T-cell (primary cell): ENCODE measurements at regions of chr5 and their contacts with region 1.

Region 1: DNA sequence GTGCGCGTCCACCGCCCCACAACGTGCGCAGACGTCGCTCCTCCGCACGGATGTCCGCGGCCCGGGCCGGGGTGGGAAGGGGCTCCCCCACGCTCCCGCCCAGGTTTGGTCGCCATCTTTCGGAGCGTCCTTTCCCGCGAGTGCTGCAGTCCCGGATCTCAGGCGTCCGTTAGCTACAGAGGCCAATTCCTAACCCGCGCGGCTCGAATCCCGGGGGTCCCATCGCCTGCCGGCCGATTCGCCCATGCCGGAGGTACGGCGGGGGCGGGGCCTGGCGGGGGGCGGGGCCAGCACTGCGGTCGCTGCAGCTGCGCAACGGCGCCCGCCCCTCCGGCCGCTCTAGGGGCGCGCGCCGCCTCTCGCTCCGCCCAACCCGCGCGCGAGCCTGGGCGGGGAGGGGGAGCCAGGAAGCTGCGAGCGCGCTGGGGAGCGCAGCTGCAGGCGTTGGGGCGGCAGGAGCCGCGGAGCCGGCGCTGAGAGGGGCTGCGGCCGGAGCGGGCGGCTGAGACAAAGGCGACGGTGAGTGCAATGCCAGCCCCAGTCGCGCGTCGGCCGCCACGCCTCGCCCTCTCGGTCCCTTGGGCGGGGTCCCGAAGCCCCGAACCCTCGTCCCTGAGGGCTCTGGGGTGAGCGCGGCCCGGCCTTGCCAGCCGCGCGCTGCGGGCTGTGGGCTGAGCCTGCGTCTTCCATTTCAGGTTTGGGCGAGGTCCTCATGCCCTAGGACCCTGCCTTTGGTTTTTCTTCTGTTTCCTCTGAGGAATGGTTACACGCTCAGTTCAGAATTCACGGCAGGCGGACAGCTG is at the start of gene CDC42SE2:
- DNase-seq: peak; percentile 74 to 94 (median 84)
- ATAC-seq: peak; percentile 89 to 93 (median 90)
- H3K4me3 ChIP-seq: peak within 1 kb of the TSS; percentile 85 to 96
- H3K4me3 Mint-ChIP-seq: peak within 1 kb of the TSS; percentile 85 to 94 (median 91)
- H3K27ac ChIP-seq: peak within 1 kb of the TSS; percentile 95
- H3K27ac Mint-ChIP-seq: peak within 1 kb of the TSS; percentile 92 to 94
- H3K4me1 ChIP-seq: peaks cover 30 to 37% of the 10 kb centered on the region in 2 experiments
- H3K4me1 Mint-ChIP-seq: peaks cover 45 to 59% (median 56%) of the 10 kb centered on the region in 3 donors
- H3K27me3 ChIP-seq: no peaks in the 10 kb centered on the region
- H3K27me3 Mint-ChIP-seq: no peaks in the 10 kb centered on the region
- total RNA-seq, gene CDC42SE2: 229 to 259 (median 238) TPM

Region 2: GRCh38 chr5:131209506-131210150 is 54.2 kb before region 1 on chr5:
- CTCF ChIA-PET with region 1: interaction called in 1 of 2 experiments, 5 read pairs
- POLR2A ChIA-PET with region 1: interaction called, 5 to 11 read pairs
- DNase-seq: peak; percentile 18 to 89 (median 61)
- ATAC-seq: peak; percentile 92 to 94 (median 94)
- H3K4me3 ChIP-seq: peak overlapping the region in 1 of 2 donors; percentile 19
- H3K4me3 Mint-ChIP-seq: peak overlapping the region; percentile 61 to 75 (median 68)
- H3K27ac ChIP-seq: peak overlapping the region; percentile 92
- H3K27ac Mint-ChIP-seq: peak overlapping the region; percentile 96 to 97
- H3K4me1 ChIP-seq: peaks cover 31 to 38% of the 10 kb centered on the region in 2 experiments
- H3K4me1 Mint-ChIP-seq: peaks cover 48 to 65% (median 52%) of the 10 kb centered on the region in 3 donors
- H3K27me3 ChIP-seq: no peaks in the 10 kb centered on the region
- H3K27me3 Mint-ChIP-seq: no peaks in the 10 kb centered on the region

Region 3: DNA sequence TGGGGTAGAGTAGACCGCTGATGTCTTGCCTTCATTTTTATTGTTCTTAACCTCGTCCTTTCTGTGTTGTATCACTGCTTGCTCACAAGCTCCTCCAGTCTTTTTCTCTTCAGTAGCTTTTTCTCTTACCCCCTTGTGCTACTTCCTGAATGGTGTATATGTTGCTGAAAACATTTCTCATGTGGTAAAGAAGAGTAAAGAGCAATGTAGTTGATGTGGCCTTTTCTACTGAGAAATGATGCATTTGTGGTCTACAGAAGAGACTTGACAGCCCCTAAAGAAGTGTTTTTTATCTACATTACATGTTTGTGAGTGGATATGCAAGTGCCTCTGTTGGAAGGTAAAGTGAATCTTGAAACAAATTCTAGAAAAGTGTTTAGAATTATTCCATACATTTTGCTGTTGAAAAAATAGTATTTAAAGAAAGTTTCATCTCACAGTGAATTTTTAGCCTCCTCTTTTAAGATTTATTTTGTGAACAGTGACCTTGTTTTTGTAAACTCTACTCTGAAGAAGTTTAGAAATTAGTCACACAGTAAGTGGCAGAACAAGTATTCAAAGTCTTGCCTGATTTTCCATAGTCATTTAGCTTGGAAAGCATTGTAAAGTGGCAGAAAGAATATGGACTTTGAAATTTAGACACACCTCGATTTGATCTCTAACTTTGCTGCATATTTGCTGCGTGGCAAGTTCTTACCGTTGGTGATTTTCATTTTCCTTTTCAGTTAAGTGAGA is 17.5 kb after region 1 on chr5:
- CTCF ChIA-PET with region 1: interaction called, 5 to 39 read pairs
- POLR2A ChIA-PET with region 1: interaction called, 4 to 91 read pairs
- DNase-seq: peak in 5 of 35 experiments; percentile 9 to 85 (median 48)
- ATAC-seq: peak; percentile 84 to 91 (median 86)
- H3K4me3 ChIP-seq: peak overlapping the region; percentile 29 to 43
- H3K4me3 Mint-ChIP-seq: peak overlapping the region; percentile 75 to 81 (median 77)
- H3K27ac ChIP-seq: peak overlapping the region; percentile 81
- H3K27ac Mint-ChIP-seq: peak overlapping the region; percentile 95 to 96
- H3K4me1 ChIP-seq: peaks cover 47 to 56% of the 10 kb centered on the region in 2 experiments
- H3K4me1 Mint-ChIP-seq: peaks cover 89 to 92% (median 92%) of the 10 kb centered on the region in 3 donors
- H3K27me3 ChIP-seq: no peaks in the 10 kb centered on the region
- H3K27me3 Mint-ChIP-seq: no peaks in the 10 kb centered on the region

Region 4: GRCh38 chr5:131328536-131329285 is 64.9 kb after region 1 on chr5:
- CTCF ChIA-PET with region 1: interaction called, 6 read pairs
- POLR2A ChIA-PET with region 1: interaction called, 5 to 15 read pairs
- DNase-seq: no peak
- ATAC-seq: peak in 1 of 4 experiments; percentile 34
- H3K4me3 ChIP-seq: no peak overlapping the region
- H3K4me3 Mint-ChIP-seq: peak overlapping the region in 1 of 3 donors; percentile 21
- H3K27ac ChIP-seq: peak overlapping the region; percentile 8
- H3K27ac Mint-ChIP-seq: peak overlapping the region; percentile 54 to 76
- H3K4me1 ChIP-seq: peaks cover 14 to 36% of the 10 kb centered on the region in 2 experiments
- H3K4me1 Mint-ChIP-seq: peaks cover 84 to 88% (median 86%) of the 10 kb centered on the region in 3 donors
- H3K27me3 ChIP-seq: no peaks in the 10 kb centered on the region
- H3K27me3 Mint-ChIP-seq: no peaks in the 10 kb centered on the region

Region 5: GRCh38 chr5:131375351-131375750 is 111.5 kb after region 1 on chr5:
- CTCF ChIA-PET with region 1: interaction called in 1 of 2 experiments, 5 read pairs
- POLR2A ChIA-PET with region 1: interaction called, 7 to 13 read pairs
- DNase-seq: peak in 1 of 35 experiments; percentile 59
- ATAC-seq: no peak
- H3K4me3 ChIP-seq: no peak overlapping the region
- H3K4me3 Mint-ChIP-seq: peak overlapping the region; percentile 26 to 52 (median 47)
- H3K27ac ChIP-seq: peak overlapping the region; percentile 79
- H3K27ac Mint-ChIP-seq: peak overlapping the region; percentile 92 to 100
- H3K4me1 ChIP-seq: peaks cover 45 to 48% of the 10 kb centered on the region in 2 experiments
- H3K4me1 Mint-ChIP-seq: peaks cover 86 to 97% (median 95%) of the 10 kb centered on the region in 3 donors
- H3K27me3 ChIP-seq: no peaks in the 10 kb centered on the region
- H3K27me3 Mint-ChIP-seq: no peaks in the 10 kb centered on the region

Region 6: DNA sequence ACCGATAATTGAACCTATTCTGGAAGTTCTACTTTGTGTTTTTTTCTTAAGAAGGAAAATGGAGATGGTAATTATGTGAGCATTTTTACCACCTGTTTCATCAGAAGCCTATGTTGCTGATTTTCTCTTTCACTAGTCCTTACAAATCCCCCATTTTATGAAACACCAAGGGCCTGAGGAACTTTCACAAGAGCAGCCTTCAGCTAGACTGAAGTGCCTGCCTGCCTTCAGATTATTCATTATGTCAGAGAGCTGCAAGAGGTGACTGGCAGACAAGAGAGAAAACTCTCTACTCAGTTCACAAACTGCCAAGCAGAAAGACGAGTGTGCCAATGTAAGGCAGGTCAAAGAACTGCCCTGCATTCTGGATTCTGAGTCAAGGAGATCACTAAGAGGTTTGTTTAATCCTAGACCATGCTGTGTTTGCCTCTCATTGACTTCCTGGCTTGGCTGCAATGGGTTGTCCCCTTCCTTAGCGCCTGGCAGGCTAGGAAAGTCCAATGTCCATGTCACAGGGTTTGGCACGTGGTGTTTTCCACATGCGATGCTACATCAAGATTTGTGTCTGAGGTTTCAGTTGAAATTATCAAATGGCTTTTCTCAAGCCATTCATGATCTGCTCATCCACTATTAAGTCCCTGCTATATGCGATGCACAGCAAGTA is 143.3 kb after region 1 on chr5:
- CTCF ChIA-PET with region 1: interaction called in 1 of 2 experiments, 3 read pairs
- POLR2A ChIA-PET with region 1: interaction called in 1 of 2 experiments, 23 read pairs
- DNase-seq: no peak
- ATAC-seq: no peak
- H3K4me3 ChIP-seq: no peak overlapping the region
- H3K4me3 Mint-ChIP-seq: no peak overlapping the region
- H3K27ac ChIP-seq: no peak overlapping the region
- H3K27ac Mint-ChIP-seq: peak overlapping the region; percentile 46 to 72
- H3K4me1 ChIP-seq: no peaks in the 10 kb centered on the region
- H3K4me1 Mint-ChIP-seq: peaks cover 7 to 20% (median 16%) of the 10 kb centered on the region in 3 donors
- H3K27me3 ChIP-seq: no peaks in the 10 kb centered on the region
- H3K27me3 Mint-ChIP-seq: no peaks in the 10 kb centered on the region